Activated CD4-positive, alpha-beta memory T cell treated with anti-CD3 and anti-CD28 coated beads for 36 hours (primary cell): ENCODE measurements at regions of chr7 and their contacts with region 1.

Region 1: GRCh38 chr7:156773966-156774365 is 119.0 kb downstream of the LMBR1 start:
- DNase-seq: no peak
- H3K4me3 Mint-ChIP-seq: no peak overlapping the region
- H3K27ac Mint-ChIP-seq: peak overlapping the region; percentile 9
- H3K4me1 Mint-ChIP-seq: peaks cover 58% of the 10 kb centered on the region
- H3K27me3 Mint-ChIP-seq: no peaks in the 10 kb centered on the region

Region 2: GRCh38 chr7:156918635-156919034 is 144.7 kb after region 1 on chr7:
- CTCF ChIA-PET with region 1: no interaction called
- POLR2A ChIA-PET with region 1: no interaction called
- intact Hi-C with region 1: loop called (anchors 1 kb)
- DNase-seq: no peak
- H3K4me3 Mint-ChIP-seq: no peak overlapping the region
- H3K27ac Mint-ChIP-seq: peak overlapping the region; percentile 71
- H3K4me1 Mint-ChIP-seq: peaks cover 42% of the 10 kb centered on the region
- H3K27me3 Mint-ChIP-seq: peaks cover 39% of the 10 kb centered on the region